ENCODE measurements at regions of chr19 and their contacts with region 1.

Region 1: DNA sequence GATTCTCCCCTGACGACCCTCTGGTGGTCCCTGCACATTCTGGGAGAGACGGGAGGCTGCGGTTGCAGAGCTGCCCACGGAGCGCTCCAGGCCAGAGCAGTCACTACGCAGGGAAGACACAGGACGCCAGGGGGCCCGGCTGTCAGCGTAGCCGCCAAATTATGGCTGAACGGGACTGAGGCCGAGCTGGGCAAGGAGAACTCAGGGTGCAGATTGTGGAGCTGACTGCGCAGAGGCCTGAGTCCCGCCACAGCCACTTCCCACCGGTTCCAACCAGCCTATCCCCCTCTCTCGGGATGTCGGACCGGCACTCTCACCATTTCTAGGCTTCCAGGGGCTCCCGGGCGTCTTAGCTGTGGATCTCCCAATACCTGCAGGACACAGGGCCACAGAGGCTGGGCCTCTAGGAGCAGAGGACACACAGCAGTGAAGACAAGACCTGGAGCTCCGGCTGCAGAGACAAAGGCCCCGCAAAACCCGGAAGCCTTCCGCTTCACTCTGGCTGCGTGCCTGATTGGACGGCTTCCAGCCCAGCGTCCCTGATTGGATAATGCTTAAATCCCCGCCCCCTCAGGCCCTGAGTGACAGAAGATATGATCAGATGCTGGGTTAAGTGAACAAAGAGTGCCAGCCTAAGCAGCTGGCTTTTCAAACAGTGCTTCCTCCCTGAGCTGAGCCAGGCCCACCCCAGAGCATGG is at the start of gene ZNF737:
- DNase-seq: peak; percentile 97 to 99 (median 98)
- H3K4me3 ChIP-seq: peak within 1 kb of the TSS; percentile 80
- H3K27ac ChIP-seq: peak within 1 kb of the TSS; percentile 64 to 86
- H3K4me1 ChIP-seq: peaks cover 4% of the 10 kb centered on the region
- H3K27me3 ChIP-seq: no peaks in the 10 kb centered on the region
- CTCF ChIP-seq: peak in 2 of 3 donors; percentile 31 to 58
- EP300 ChIP-seq: no peak
- POLR2A ChIP-seq: peak; percentile 45
- total RNA-seq, gene ZNF737: 21.8 to 63.8 (median 30.4) TPM

Region 2: GRCh38 chr19:20513179-20513934 is 52.1 kb before region 1 on chr19:
- intact Hi-C with region 1: no loop called
- DNase-seq: no peak
- H3K4me3 ChIP-seq: no peak overlapping the region
- H3K27ac ChIP-seq: no peak overlapping the region
- H3K4me1 ChIP-seq: no peaks in the 10 kb centered on the region
- H3K27me3 ChIP-seq: no peaks in the 10 kb centered on the region
- CTCF ChIP-seq: no peak
- EP300 ChIP-seq: no peak
- POLR2A ChIP-seq: no peak

Region 3: DNA sequence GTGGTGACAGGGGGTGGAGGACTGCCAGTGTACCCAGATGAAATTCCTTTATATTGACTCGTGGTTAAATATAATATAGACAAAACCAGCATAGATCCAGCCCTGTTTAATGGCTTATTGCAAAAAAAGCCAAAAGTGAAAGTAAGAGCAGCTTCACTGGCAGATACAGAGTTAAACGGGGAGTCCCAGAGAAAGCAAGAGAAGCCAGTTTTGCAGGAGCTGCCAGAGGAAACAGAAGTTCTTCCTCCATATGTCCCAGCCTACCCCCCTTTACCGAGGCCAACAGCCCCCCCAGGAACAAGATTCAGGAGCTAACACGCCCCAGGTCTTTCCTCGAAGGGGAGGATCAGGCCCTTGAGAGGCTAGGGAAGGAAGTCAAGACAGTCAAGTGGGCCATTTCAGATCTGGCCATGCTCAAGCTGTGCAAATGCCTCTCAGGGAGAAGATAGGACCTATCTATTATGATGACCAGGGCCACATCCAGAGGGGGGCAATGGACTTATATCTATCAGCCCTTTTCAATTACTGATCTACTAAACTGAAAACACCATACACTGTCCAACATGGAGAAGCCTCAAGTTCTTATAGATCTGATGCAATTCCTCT is 47.3 kb after region 1 on chr19:
- intact Hi-C with region 1: loop called in 2 of 4 experiments (anchors 5 to 10 kb)
- DNase-seq: peak; percentile 20 to 44 (median 39)
- H3K4me3 ChIP-seq: peak overlapping the region; percentile 36
- H3K27ac ChIP-seq: peak overlapping the region; percentile 34 to 85
- H3K4me1 ChIP-seq: peaks cover 6% of the 10 kb centered on the region
- H3K27me3 ChIP-seq: no peaks in the 10 kb centered on the region
- CTCF ChIP-seq: no peak
- EP300 ChIP-seq: no peak
- POLR2A ChIP-seq: no peak

Region 4: DNA sequence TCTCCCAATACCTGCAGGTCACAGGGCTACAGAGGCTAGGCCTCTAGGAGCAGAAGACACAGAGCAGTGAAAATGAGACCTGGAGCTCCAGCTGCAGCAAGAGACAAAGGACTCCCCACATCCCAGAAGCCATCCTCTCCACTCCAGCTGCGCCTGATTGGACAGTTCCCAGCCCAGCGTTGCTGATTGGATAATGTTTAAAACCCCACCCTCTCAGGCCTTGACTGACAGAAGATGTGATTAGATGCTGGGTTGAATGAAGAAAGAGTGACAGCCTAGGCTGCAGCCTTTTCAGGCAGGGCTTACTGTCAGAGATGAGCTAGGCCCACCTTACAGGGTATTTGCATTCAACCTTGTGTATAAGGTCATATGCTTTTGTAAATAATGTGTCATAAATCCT is 704.3 kb after region 1 on chr19:
- intact Hi-C with region 1: loop called in 1 of 4 experiments (anchors 10 kb)
- DNase-seq: no peak
- H3K4me3 ChIP-seq: no peak overlapping the region
- H3K27ac ChIP-seq: no peak overlapping the region
- H3K4me1 ChIP-seq: peaks cover 2% of the 10 kb centered on the region
- H3K27me3 ChIP-seq: no peaks in the 10 kb centered on the region
- CTCF ChIP-seq: no peak
- EP300 ChIP-seq: no peak
- POLR2A ChIP-seq: no peak